A549 (cell line): ENCODE measurements at regions of chr2 and their contacts with region 1.

Region 1: DNA sequence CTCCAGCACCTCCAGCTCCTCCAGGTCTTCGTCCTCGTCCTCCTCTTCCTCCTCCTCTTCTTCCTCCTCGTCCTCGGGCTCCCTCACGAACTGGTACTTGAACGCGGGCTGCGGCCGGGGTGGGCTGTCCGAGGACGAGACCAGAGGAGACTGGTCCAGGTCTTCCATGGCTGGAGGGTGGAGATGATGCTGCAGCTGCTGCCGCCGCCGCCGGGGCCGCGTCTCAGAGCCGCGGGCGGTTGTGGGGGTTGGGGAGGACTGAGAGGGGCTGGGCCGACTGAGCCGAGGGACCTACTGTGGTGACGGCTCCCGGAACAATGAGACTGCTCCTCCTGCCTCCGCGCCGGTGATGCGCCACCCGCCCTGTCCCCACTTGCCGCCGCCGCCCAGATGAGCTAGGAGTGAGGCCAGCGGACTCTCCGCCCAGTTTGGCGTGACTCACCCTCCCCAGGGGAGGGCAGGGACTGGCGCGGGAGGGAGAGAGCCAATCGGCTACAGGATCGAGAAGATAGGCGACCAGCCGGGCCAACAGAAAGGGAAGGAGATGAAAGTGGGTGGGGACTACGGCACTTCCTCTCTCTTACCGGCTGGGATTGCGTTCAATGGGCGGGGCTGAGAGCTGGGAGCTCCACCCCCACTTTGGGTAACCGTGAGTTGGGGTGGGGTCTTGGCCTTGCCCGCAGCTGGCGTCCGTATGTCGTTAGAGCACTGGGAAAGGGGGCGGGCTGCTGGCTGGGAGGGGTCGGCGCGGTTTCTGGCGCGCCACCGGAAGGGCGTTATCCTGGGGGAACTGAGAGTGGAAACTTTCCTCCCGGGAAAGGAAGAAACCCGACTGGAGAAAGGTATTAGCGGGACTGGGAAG is at the start of gene RTN4:
- DNase-seq: peak; percentile 97 to 100
- ATAC-seq: peak; percentile 77 to 86
- H3K4me3 ChIP-seq: peak within 1 kb of the TSS; percentile 95
- H3K27ac ChIP-seq: peak within 1 kb of the TSS; percentile 94 to 97
- H3K4me1 ChIP-seq: peaks cover 38% of the 10 kb centered on the region
- CTCF ChIP-seq: no peak
- EP300 ChIP-seq: no peak; a peak in 1 of 5 replicates
- POLR2A ChIP-seq: peak; percentile 99
- RAD21 ChIP-seq: 0 out of 5 replicates have a peak, but pooled peaks of 1 of the 2 experiments have one; percentile 16
- polyA plus RNA-seq, gene RTN4: 302 and 336 TPM in 2 replicates

Region 2: DNA sequence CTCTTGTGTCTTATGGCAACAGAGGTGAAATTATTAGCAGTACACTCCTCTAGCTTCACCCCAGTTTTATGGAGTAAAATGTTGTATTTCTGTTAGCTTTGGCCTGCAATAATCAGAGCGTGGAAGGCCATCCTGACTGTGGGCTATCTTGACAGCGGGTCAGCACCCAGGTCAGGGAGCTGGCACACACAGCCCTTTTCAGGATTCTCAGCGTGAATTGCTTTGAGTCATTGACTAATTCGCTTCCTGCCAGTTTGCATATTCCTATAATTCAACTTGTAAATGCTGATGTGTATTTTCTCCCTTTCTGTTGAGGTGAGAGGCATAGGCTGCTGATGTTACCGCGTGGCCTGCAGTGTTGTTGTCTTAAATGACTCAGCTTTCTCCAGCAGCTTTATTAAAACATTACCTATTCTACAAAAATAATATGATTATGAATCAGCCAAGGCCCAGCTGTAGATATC is 436.5 kb before region 1 on chr2:
- CTCF ChIA-PET with region 1: no interaction called
- POLR2A ChIA-PET with region 1: no interaction called
- DNase-seq: peak; percentile 22 to 83
- ATAC-seq: peak; percentile 77 to 83
- H3K4me3 ChIP-seq: peak overlapping the region; percentile 2; the same call in 1 of the 3 replicates
- H3K27ac ChIP-seq: peak overlapping the region; percentile 80 to 86
- H3K4me1 ChIP-seq: peaks cover 75% of the 10 kb centered on the region
- CTCF ChIP-seq: no peak
- EP300 ChIP-seq: peak; percentile 38 to 42; a peak in 2 of 5 replicates
- POLR2A ChIP-seq: no peak
- RAD21 ChIP-seq: peak in 1 of 2 experiments; percentile 31; a peak in 2 of 5 replicates

Region 3: GRCh38 chr2:54741250-54741649 is 309.1 kb before region 1 on chr2:
- CTCF ChIA-PET with region 1: no interaction called
- POLR2A ChIA-PET with region 1: no interaction called
- DNase-seq: no peak
- ATAC-seq: no peak
- H3K4me3 ChIP-seq: no peak overlapping the region
- H3K27ac ChIP-seq: no peak overlapping the region
- H3K4me1 ChIP-seq: no peaks in the 10 kb centered on the region
- CTCF ChIP-seq: no peak
- EP300 ChIP-seq: no peak
- POLR2A ChIP-seq: no peak
- RAD21 ChIP-seq: no peak

Region 4: DNA sequence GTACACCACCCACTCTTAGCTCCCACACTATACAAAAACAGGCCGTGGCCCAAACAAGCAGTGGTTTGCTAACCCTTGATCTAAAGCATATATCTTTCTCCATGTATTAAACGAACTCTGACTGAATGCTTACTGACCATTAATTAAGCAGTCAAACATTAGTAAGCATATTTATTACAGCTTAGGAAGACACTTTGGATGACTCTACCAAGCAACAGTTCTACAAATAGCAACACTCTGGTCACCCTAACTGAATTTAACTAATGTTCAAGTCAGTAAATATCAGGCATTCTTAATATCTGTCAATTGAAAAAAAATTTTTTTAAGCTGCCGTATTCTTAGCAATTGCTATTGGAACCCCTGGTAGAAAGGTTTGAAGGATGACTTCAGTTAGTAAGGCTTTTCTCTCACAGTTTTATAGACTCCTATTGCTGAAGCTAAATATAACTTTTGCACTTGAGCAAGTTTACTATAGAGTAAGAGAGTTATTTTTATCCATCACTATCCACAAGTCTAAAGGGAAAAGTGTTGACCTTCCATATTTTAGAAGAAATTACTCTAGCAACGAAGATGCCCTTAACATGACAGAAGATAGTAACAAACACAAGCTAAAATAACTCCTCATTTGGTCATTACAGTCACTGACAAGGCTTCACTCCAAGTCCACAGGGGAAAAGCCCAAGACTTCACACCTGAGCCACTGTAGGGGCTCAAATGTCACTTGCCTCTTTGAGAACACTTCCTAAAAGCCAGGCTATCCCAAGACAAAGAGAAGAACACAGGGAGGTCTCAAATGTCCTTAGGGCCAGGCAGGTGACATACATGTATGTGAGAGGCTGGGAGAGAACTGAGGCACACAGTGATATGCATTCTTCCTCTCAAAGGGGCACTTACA is 74.5 kb before region 1 on chr2:
- CTCF ChIA-PET with region 1: interaction called, 13 read pairs
- POLR2A ChIA-PET with region 1: interaction called, 3 read pairs
- DNase-seq: no peak
- ATAC-seq: peak in 1 of 2 experiments; percentile 17; a peak in 1 of 6 replicates
- H3K4me3 ChIP-seq: no peak overlapping the region
- H3K27ac ChIP-seq: no peak overlapping the region
- H3K4me1 ChIP-seq: peaks cover 19% of the 10 kb centered on the region; the same call in 1 of the 3 replicates
- CTCF ChIP-seq: no peak
- EP300 ChIP-seq: no peak
- POLR2A ChIP-seq: no peak
- RAD21 ChIP-seq: no peak

Region 5: GRCh38 chr2:55026202-55026601 is 24.2 kb before region 1 on chr2:
- CTCF ChIA-PET with region 1: interaction called, 13 read pairs
- POLR2A ChIA-PET with region 1: interaction called, 6 read pairs
- DNase-seq: no peak
- ATAC-seq: peak; percentile 23 to 27; a peak in 3 of 6 replicates
- H3K4me3 ChIP-seq: no peak overlapping the region
- H3K27ac ChIP-seq: no peak overlapping the region
- H3K4me1 ChIP-seq: peaks cover 49% of the 10 kb centered on the region
- CTCF ChIP-seq: no peak
- EP300 ChIP-seq: no peak
- POLR2A ChIP-seq: no peak
- RAD21 ChIP-seq: no peak

Region 6: DNA sequence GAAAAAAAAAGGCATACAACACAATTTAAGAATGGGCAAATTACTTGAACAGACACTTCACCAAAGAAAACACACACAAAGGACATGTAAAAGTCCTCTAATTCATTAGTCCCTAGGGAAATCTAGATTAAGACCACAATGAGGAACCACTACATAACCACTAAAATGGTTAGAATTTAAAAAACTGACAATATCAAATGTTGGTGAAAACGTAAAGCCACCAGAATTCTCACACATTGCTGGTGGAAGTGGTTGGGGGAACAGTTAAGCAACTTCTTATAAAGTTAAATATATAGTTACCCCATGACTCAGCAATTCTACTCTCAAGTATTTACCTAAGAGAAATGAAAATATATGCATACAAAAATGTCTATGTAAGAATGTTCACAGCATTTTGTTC is 11.9 kb before region 1 on chr2:
- CTCF ChIA-PET with region 1: interaction called, 25 read pairs
- POLR2A ChIA-PET with region 1: interaction called, 9 read pairs
- DNase-seq: no peak
- ATAC-seq: no peak
- H3K4me3 ChIP-seq: no peak overlapping the region
- H3K27ac ChIP-seq: peak overlapping the region; percentile 8 to 19; a peak in 2 of 6 replicates
- H3K4me1 ChIP-seq: peaks cover 38% of the 10 kb centered on the region
- CTCF ChIP-seq: no peak
- EP300 ChIP-seq: no peak
- POLR2A ChIP-seq: no peak
- RAD21 ChIP-seq: no peak

Region 7: DNA sequence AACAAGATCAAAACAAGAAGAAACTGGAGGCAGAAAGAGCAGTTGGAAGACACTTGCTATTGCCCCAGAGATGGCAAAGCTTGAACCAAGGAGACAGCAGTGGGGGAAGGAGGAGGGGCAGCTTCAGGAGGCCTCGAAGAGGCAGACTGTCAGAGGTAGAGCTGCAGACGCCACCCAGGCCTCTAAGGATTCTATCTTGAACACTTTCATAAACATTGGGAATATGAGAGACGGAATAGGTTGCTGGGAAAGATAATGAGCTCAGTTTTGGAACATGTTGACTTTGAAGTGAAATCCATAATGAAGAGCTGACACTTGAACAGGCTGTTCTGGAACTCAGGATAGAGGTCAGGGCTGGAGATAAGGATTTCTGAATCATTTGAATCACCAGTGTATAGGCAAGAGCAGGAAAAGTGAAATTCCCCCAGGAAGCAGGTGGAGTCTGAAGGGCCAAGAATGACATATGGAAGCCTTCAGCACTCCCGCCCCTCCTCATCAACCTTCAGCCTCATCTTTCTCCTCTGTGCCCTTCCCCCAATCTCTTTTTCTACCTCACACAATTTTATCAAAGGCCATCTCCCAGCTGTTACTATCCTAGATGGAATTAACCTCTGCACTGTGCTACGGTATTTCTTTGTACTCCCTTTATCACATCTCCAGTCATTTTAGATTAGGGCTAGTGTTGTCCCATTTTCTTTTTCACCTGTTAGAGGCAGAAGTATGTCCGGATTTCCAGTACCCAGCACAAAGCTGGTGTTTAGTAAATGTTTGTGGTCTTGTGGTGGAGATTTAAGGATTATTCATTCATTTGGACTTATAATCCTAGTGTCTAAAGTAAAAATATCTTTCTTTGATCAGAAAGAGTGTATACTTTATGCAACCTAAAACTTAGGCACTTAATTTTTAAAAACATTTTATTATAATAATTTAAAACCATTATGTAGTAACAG is 47.4 kb after region 1 on chr2:
- CTCF ChIA-PET with region 1: interaction called, 6 read pairs
- POLR2A ChIA-PET with region 1: interaction called, 37 read pairs
- DNase-seq: peak in 1 of 2 experiments; percentile 39
- ATAC-seq: peak; percentile 75 to 79
- H3K4me3 ChIP-seq: no peak overlapping the region
- H3K27ac ChIP-seq: peak overlapping the region; percentile 77 to 82
- H3K4me1 ChIP-seq: peaks cover 68% of the 10 kb centered on the region
- CTCF ChIP-seq: no peak
- EP300 ChIP-seq: 0 out of 5 replicates have a peak, but pooled peaks of 1 of the 2 experiments have one; percentile 20
- POLR2A ChIP-seq: no peak
- RAD21 ChIP-seq: no peak

Region 8: DNA sequence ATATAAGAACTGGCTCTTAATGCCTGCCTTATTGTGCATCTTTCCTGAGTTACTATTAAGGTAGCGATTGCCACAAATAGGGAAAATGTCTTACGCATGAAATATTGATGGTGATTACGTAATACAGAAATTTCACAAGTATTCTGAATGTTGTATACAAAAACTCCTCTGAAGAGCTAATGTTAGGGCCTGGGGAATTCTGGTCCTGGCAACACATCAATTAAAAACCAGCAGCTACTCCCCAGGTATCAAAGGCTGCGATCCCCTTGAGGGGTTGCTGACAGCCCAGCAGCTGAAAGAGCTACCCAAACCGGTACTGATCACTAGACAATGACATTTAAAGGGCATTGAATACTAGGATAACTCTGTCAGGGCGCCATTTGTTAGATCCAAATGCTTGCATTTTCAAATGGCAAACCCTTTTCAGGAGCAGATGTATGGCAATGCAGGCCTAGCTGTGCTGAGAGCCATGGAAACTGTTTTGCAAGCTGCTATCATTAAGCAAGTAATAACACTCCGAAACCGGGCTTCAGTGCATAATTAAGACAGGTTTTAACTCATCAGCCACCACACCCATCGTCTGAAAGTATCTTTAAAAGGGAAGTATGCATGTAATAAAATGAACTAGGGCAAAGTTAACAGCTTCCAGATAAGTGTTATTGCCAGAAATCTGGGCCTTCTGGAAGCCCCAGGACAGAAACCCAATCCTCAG is 103.4 kb after region 1 on chr2:
- CTCF ChIA-PET with region 1: interaction called, 15 read pairs
- POLR2A ChIA-PET with region 1: interaction called, 7 read pairs
- DNase-seq: no peak
- ATAC-seq: no peak
- H3K4me3 ChIP-seq: no peak overlapping the region
- H3K27ac ChIP-seq: peak overlapping the region in 1 of 2 experiments; percentile 70; a peak in 3 of 6 replicates
- H3K4me1 ChIP-seq: peaks cover 35% of the 10 kb centered on the region
- CTCF ChIP-seq: no peak
- EP300 ChIP-seq: no peak
- POLR2A ChIP-seq: no peak
- RAD21 ChIP-seq: no peak